ENCODE measurements at regions of chr17 and their contacts with region 1.

Region 1: DNA sequence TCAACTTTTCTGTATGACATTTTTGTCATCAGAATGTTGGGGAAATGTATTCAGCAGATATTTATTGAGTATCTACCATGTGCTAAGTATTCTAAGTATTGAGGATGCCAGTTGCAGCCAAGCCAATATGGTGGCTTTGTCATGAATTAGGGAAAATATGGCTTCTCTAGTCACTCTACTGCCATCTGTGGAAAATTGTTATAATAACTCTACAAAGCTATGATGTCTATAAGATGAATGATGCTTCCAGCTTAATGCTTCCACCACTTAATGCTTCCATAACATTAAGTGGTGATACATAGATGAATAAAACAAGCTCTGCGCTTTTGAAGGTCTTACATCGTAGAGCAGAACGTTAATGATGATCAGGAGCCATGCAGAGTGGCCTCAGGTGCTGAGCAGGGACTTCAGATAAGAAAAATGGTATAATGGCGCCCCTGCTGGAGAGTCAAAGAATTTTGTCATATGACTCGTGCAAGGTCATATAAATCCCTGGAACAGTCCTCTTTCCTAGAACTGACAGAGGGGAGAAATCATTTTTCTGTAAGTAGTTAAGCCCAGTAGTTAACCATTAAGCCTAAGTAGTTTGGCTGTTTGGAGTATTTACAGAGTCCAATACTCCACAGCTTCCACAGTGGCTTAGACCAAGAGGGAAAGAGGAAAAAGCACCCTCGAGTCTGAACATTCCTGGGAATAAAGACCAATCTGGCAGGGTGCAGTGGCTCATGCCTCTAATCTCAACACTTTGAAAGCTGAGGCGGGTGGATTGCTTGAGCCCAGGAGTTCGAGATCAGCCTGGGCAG is 2.7 kb upstream of the TMIGD1 start:
- DNase-seq: peak; percentile 78
- H3K4me3 Mint-ChIP-seq: no peak overlapping the region
- H3K27ac Mint-ChIP-seq: no peak overlapping the region
- H3K4me1 Mint-ChIP-seq: peaks cover 39% of the 10 kb centered on the region
- H3K27me3 Mint-ChIP-seq: no peaks in the 10 kb centered on the region

Region 2: DNA sequence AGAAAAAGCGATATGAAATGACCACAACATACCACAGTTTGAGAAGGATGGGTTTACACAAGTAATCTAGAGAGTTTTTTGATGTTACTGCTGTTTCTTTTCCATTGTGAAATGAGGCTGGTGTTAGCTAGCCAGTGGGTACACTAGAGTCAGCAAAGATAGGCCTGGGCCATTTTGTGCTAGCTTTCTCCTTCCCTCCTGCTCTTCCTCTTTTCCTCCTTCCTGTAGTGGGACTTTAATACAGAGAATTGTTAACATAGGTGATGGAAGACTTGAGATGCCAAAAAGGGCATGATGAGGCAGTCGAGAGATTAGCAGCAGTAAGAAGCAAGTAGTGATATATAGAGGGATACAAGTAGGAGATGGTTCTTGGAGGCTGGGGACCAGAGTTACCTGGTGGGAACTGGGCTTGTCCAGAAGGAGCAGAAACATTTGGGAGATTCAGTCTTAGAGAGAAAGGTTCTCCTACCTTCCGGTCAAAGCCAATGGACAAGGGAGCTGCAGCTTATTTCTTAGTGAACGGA is 212.2 kb before region 1 on chr17:
- CTCF ChIA-PET with region 1: interaction called, 15 read pairs
- POLR2A ChIA-PET with region 1: no interaction called
- DNase-seq: no peak
- H3K4me3 Mint-ChIP-seq: no peak overlapping the region
- H3K27ac Mint-ChIP-seq: no peak overlapping the region
- H3K4me1 Mint-ChIP-seq: peaks cover 35% of the 10 kb centered on the region
- H3K27me3 Mint-ChIP-seq: no peaks in the 10 kb centered on the region

Region 3: GRCh38 chr17:30200106-30200505 is 136.5 kb before region 1 on chr17:
- CTCF ChIA-PET with region 1: no interaction called
- POLR2A ChIA-PET with region 1: no interaction called
- DNase-seq: no peak
- H3K4me3 Mint-ChIP-seq: no peak overlapping the region
- H3K27ac Mint-ChIP-seq: no peak overlapping the region
- H3K4me1 Mint-ChIP-seq: no peaks in the 10 kb centered on the region
- H3K27me3 Mint-ChIP-seq: peaks cover 16% of the 10 kb centered on the region